ENCODE measurements at regions of chr11 and their contacts with region 1.

Region 1: DNA sequence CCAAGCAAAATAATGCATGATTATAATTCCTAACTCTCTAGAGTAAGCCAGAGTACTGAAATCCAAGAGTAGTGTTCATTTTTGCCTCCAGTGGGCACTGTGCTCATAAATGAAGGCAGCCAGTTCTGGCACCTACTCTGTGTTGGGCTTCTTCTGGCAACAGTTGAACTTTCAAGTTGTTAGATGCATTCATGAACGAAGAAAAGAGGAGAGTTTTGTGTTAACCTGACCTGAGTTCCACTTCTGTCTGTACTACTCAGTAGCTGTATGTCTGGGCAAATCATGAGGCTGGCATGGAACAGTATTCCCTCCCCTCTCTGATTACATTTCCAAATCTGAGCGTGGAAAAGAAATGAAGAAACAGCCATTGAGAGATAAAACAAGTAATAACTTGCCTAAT is 20.3 kb upstream of the TENM4 start:
- DNase-seq: no peak
- H3K4me3 ChIP-seq: no peak overlapping the region
- CTCF ChIP-seq: peak; percentile 63

Region 2: GRCh38 chr11:79482800-79483199 is 21.7 kb after region 1 on chr11:
- CTCF ChIA-PET with region 1: interaction called, 11 read pairs
- POLR2A ChIA-PET with region 1: no interaction called
- DNase-seq: no peak
- H3K4me3 ChIP-seq: no peak overlapping the region
- CTCF ChIP-seq: no peak